ENCODE measurements at regions of chr3 and their contacts with region 1.

Region 1: DNA sequence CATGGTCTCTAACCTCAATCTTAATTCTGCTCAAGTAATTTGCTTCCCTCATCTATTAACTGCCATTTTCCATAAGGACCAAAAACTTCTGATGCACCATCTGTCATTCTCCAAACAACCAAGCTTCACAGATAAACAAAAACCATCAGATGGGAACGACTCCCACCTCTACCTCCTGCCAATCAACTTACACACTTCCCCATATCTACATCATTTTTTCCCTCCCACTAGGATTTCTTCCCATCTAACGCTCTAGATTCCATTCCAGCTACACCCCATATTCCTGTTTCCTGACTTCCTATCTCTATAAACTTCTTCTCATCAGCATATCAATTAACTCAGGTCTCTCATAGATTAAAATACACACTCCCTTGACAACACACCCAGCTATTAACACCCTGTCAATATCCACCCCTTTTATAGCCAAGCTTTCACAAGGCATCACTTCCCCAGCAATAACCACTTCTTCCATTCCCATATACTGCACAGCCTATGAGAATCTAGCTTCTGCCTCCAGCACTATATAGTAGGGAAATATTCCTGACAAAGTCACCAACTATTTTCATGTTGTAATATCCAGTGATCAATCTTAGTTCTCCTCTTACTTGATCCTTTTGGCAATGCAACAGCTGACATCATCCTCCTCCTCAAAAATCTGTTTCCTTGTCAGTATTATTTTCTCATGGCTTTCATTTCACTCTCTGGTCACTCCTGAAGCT is 39.2 kb downstream of the SNX4 start:
- DNase-seq: no peak
- CTCF ChIP-seq: no peak

Region 2: DNA sequence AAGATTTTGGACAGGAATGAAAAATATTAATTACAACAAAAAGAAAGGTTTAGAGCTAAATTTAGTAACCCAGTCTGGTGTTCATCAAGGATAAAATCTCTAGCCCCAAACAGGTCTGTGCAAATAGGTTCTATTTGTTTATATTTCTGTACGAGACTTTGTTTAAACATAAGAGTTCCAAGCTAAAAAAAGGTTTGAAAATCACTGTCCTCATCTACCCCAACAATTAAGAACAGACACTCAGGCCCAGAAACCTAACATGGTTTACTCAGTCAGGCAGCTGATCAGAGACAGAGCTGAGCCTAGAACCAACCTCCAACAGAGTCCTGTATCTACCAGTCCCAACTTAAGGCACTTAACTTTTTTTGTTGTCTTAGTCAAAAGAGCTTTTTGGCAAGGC is 10.1 kb before region 1 on chr3:
- CTCF ChIA-PET with region 1: interaction called, 14 read pairs
- POLR2A ChIA-PET with region 1: no interaction called
- DNase-seq: no peak
- CTCF ChIP-seq: no peak

Region 3: GRCh38 chr3:125519678-125520589 is 39.1 kb after region 1 on chr3 and contains the start of gene SNX4:
- CTCF ChIA-PET with region 1: no interaction called
- POLR2A ChIA-PET with region 1: interaction called, 10 read pairs
- DNase-seq: peak; percentile 93
- CTCF ChIP-seq: no peak